IMR-90 (cell line): ENCODE measurements at regions of chr12 and their contacts with region 1.

Region 1: GRCh38 chr12:124633273-124633966 is 66.0 kb upstream of the NCOR2 start:
- DNase-seq: peak; percentile 73
- ATAC-seq: peak; percentile 69
- H3K4me3 ChIP-seq: no peak overlapping the region
- H3K27ac ChIP-seq: peak overlapping the region; percentile 74; the same call in 1 of the 2 replicates
- H3K4me1 ChIP-seq: peaks cover 17% of the 10 kb centered on the region
- H3K27me3 ChIP-seq: no peaks in the 10 kb centered on the region
- CTCF ChIP-seq: no peak
- POLR2A ChIP-seq: no peak
- RAD21 ChIP-seq: no peak

Region 2: DNA sequence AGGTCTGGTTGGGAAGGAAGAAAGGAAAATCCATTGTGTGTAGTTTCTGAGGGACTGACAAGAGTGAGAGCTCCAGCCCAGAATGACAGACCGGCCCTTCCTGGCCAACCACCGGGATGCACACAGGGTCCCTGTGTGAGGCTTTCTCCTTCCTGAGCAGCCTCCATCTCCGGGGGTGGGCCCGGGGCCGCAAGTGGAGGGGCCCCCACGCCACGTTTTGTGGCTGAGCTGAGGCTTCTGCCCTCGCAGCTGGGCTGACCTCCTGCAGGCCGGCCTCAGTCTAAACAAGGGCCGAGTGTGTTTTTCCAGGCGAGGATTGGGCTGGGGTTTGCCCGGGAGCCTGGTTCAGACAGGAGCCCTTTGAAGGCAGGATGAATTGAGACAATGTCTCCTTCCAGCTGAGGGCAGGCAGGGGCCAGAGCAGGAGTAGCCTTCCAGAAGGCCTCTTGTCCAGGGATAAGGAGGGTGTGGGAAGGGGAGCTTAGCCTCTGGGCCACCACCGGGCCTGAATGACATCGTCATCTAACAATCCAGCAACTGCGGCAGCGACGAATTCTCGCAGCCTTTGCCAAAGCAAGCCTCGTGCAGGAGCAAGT is 30.4 kb after region 1 on chr12:
- CTCF ChIA-PET with region 1: no interaction called
- POLR2A ChIA-PET with region 1: no interaction called
- dilution Hi-C with region 1: no loop called
- in situ Hi-C with region 1: no loop called
- intact Hi-C with region 1: loop called (anchors 1 kb)
- DNase-seq: no peak
- ATAC-seq: no peak
- H3K4me3 ChIP-seq: no peak overlapping the region
- H3K27ac ChIP-seq: no peak overlapping the region
- H3K4me1 ChIP-seq: peaks cover 8% of the 10 kb centered on the region
- H3K27me3 ChIP-seq: no peaks in the 10 kb centered on the region
- CTCF ChIP-seq: no peak
- POLR2A ChIP-seq: no peak
- RAD21 ChIP-seq: no peak

Region 3: DNA sequence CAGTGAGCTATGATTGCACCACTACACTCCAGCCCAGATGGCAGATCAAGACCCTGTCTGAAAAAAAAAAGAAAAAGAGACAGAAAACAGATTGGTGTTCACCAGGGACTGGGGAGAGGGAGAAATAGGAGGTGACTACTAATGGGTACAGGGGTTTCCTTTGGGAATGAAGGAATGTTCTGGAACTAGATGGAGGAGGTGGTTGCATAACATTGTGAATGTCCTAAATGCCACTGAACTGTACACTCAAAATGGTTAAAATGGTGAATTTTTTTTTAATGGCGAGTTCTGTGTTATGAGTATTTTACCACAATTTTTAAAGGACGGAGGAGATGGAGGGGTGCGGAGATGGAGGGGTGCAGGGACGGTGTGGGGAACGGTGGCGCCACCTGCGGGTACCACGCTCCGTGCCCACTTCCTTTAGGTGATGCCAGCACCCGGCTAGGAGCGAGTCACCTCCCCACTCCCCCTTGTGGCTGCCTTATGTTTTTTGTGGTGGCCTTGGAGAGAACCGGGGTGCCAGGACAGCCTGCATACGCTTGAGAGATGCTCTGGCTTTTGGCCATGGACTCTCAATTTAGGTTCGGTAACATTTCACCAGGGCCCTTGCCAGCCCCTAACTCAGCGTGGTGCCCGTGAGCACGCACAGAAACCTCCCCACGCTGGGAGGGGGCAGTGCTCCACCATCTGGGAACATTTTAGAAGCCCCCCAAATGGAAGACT is 264.9 kb after region 1 on chr12:
- CTCF ChIA-PET with region 1: no interaction called
- POLR2A ChIA-PET with region 1: no interaction called
- dilution Hi-C with region 1: no loop called
- in situ Hi-C with region 1: no loop called
- intact Hi-C with region 1: no loop called
- DNase-seq: no peak
- ATAC-seq: 0 out of 2 replicates have a peak, but pooled peaks have one; percentile 10
- H3K4me3 ChIP-seq: no peak overlapping the region
- H3K27ac ChIP-seq: no peak overlapping the region
- H3K4me1 ChIP-seq: peaks cover 15% of the 10 kb centered on the region
- H3K27me3 ChIP-seq: no peaks in the 10 kb centered on the region
- CTCF ChIP-seq: peak; percentile 48
- POLR2A ChIP-seq: no peak
- RAD21 ChIP-seq: peak; percentile 37

Region 4: GRCh38 chr12:125159683-125160082 is 526.3 kb after region 1 on chr12:
- CTCF ChIA-PET with region 1: no interaction called
- POLR2A ChIA-PET with region 1: no interaction called
- dilution Hi-C with region 1: no loop called
- in situ Hi-C with region 1: no loop called
- intact Hi-C with region 1: no loop called
- DNase-seq: no peak
- ATAC-seq: no peak
- H3K4me3 ChIP-seq: no peak overlapping the region
- H3K27ac ChIP-seq: no peak overlapping the region
- H3K4me1 ChIP-seq: no peaks in the 10 kb centered on the region
- H3K27me3 ChIP-seq: no peaks in the 10 kb centered on the region
- CTCF ChIP-seq: no peak
- POLR2A ChIP-seq: no peak
- RAD21 ChIP-seq: no peak